H1 (cell line): ENCODE measurements at regions of chr4 and their contacts with region 1.

Region 1: DNA sequence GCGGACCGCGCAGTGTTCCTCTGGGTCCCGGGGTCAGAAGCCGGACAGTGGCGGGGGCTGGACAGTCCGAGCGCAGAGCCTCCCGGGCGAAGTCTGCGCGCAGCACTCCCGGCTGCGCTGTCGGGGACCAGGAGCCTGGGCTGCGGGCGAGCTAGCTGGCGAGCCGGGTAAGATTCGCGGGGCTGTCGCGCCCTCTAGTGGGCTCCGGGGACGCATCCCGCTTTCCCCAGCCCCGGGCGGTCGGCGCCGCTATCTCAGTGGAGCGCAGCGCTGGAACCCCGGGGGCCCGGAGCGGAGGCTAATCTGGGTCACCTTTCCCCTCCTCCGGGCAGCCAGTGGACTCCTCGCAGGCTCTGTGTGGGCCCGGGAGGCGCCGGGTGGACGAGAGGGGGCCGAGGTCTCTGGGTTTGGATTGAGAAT is 4.2 kb downstream of the PDGFRA start:
- DNase-seq: peak in 1 of 2 experiments; percentile 92
- H3K4me3 ChIP-seq: peak overlapping the region; percentile 51 to 85 (median 66)
- H3K27ac ChIP-seq: no peak overlapping the region
- H3K4me1 ChIP-seq: peaks cover 0 to 22% (median 15%) of the 10 kb centered on the region in 4 experiments; a peak in 6 of 7 replicates
- H3K27me3 ChIP-seq: peaks cover 38 to 56% (median 52%) of the 10 kb centered on the region in 4 experiments
- CTCF ChIP-seq: peak in 2 of 3 experiments; percentile 74 to 86; a peak in 3 of 4 replicates
- EP300 ChIP-seq: no peak
- POLR2A ChIP-seq: no peak
- RAD21 ChIP-seq: peak; percentile 79 to 90

Region 2: DNA sequence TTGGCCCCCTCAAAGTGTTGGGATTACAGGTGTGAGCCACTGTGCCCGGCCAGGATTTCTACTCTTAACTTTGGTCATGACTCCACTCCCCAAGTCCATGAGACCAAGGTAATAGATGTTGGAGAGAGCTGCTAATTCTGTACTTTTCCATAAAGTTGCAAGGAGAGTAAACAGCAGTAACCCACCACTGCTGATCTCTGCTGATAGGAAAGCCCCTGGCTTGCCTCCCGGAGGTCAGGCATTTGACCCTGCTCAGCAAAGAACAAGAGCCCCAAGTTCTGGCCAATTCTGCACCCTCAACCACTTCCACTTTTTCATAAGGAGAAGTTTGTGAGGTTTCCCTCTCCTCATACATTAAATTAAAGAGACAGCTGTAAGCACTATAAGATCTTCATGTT is 1228.1 kb before region 1 on chr4:
- CTCF ChIA-PET with region 1: interaction called, 10 read pairs
- POLR2A ChIA-PET with region 1: no interaction called
- DNase-seq: no peak
- H3K4me3 ChIP-seq: no peak overlapping the region
- H3K27ac ChIP-seq: no peak overlapping the region
- H3K4me1 ChIP-seq: no peaks in the 10 kb centered on the region
- H3K27me3 ChIP-seq: no peaks in the 10 kb centered on the region
- CTCF ChIP-seq: no peak
- EP300 ChIP-seq: no peak
- POLR2A ChIP-seq: no peak
- RAD21 ChIP-seq: no peak

Region 3: DNA sequence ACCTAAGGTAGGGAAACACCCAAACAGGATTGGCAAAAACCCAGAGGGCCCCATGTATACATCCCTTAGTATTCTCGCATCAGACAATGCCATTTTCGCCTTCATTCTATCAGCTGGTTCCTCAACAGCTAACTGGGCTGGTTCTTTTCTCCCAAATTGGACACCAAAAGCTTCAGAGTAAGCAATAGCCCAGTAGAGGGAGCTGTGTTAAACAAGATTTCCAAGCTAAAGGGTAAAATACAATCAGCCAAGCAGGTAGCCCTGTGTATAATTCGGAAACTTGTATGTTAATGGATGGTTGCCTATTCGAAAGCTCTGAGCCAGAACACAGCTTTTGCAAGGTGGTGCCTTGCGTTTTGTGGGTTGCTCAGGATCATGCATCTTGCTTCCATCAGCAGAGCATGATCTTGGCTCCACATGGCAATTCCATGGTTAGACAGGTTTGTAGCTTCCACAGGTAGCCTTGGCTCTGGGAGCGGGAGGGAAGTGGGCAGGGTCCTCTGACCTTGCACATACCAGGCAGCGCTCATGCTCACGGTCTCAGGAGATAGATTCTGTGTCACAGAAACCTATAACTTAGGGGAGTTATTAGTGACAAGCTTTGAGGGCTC is 526.8 kb before region 1 on chr4:
- CTCF ChIA-PET with region 1: interaction called, 16 read pairs
- POLR2A ChIA-PET with region 1: no interaction called
- DNase-seq: no peak
- H3K4me3 ChIP-seq: no peak overlapping the region
- H3K27ac ChIP-seq: no peak overlapping the region
- H3K4me1 ChIP-seq: peaks cover 0 to 10% (median 3%) of the 10 kb centered on the region in 4 experiments; a peak in 5 of 7 replicates
- H3K27me3 ChIP-seq: no peaks in the 10 kb centered on the region
- CTCF ChIP-seq: peak in 2 of 3 experiments; percentile 63 to 75; a peak in 3 of 4 replicates
- EP300 ChIP-seq: no peak
- POLR2A ChIP-seq: no peak
- RAD21 ChIP-seq: peak; percentile 66 to 76

Region 4: DNA sequence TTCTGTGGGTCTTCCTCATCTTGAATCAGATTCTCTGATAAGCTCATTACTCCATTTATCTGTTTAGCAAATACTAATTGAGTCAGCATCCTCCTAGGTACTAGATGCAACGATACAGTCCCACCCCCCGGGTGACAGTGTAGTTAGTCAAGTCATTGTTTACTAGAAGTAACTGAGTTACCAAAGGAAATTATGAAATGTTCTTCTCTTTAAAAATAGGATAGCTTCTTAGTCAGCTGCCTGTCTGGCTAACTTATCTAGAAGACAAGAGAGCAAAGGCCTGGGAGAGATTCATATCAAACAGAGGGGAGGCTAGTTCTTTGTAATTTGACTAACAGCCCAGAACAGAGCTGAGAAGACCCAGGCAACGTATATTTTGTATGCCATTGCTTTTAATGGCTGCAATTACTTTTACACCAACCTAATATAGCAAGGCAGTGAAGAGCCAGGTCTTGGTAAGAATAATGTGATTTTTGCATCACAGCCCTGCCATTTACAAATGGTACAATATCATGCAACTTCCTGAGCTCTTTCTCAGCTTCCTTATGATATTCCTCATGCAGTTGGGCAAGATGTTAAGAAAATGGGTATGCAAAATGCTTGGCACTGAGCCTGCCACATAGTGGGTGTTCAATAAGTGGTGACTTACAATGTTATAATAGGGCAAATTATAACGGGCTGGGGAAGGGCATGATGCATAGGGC is 318.8 kb before region 1 on chr4:
- CTCF ChIA-PET with region 1: interaction called, 65 read pairs
- POLR2A ChIA-PET with region 1: no interaction called
- DNase-seq: no peak
- H3K4me3 ChIP-seq: no peak overlapping the region
- H3K27ac ChIP-seq: no peak overlapping the region
- H3K4me1 ChIP-seq: no peaks in the 10 kb centered on the region
- H3K27me3 ChIP-seq: no peaks in the 10 kb centered on the region
- CTCF ChIP-seq: no peak
- EP300 ChIP-seq: no peak
- POLR2A ChIP-seq: no peak
- RAD21 ChIP-seq: no peak

Region 5: DNA sequence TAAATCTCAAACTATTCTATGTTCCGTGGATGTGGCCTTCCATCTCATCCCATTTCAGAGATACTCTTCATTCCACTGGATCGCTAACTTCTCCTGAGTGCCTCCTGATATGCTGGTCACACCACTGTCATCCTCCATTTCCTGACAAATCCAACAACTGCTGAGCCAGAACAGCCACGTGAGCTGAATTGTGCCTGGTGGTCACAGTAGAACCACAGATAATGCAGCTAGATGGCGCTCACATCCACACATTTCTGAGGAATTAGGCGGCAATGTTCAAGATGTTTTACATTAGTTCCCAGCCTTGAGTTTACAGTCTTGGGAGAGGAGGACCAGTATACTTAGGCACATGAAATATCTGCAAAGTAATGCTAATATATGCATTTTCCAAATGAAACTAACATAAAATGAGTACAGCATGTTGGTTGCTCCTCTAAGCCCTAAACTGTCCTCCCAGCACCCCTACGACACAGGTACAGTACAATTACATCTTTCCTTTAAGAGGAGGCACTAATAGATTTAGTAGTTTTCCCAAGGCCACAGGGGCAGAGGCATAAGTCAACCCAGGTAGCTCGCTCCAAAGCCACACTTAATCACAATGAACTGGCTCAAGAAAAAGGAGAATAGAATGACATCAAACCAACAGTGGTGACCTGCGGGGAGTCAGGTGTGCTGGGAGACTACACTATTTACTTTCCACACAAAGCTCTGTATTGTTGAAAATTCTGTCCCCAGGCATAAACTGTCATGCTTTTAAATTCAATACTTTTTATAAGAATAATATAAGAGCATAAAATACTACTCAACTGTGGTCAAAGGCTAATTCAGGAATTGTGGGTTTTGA is 303.1 kb before region 1 on chr4:
- CTCF ChIA-PET with region 1: interaction called, 53 read pairs
- POLR2A ChIA-PET with region 1: no interaction called
- DNase-seq: peak; percentile 49 to 65
- H3K4me3 ChIP-seq: no peak overlapping the region
- H3K27ac ChIP-seq: no peak overlapping the region
- H3K4me1 ChIP-seq: no peaks in the 10 kb centered on the region
- H3K27me3 ChIP-seq: no peaks in the 10 kb centered on the region; a peak in 1 of 7 replicates
- CTCF ChIP-seq: peak; percentile 68 to 95 (median 83)
- EP300 ChIP-seq: no peak
- POLR2A ChIP-seq: no peak
- RAD21 ChIP-seq: peak; percentile 90 to 91

Region 6: GRCh38 chr4:54277691-54278090 is 44.4 kb after region 1 on chr4:
- CTCF ChIA-PET with region 1: interaction called, 10 read pairs
- POLR2A ChIA-PET with region 1: no interaction called
- DNase-seq: no peak
- H3K4me3 ChIP-seq: peak overlapping the region in 2 of 4 experiments; percentile 24 to 50; a peak in 2 of 8 replicates
- H3K27ac ChIP-seq: no peak overlapping the region
- H3K4me1 ChIP-seq: peaks cover 5 to 18% (median 16%) of the 10 kb centered on the region in 4 experiments; a peak in 6 of 7 replicates
- H3K27me3 ChIP-seq: no peaks in the 10 kb centered on the region
- CTCF ChIP-seq: no peak
- EP300 ChIP-seq: no peak
- POLR2A ChIP-seq: no peak
- RAD21 ChIP-seq: no peak

Region 7: GRCh38 chr4:54296548-54297203 is 63.4 kb after region 1 on chr4:
- CTCF ChIA-PET with region 1: no interaction called
- POLR2A ChIA-PET with region 1: no interaction called
- DNase-seq: no peak
- H3K4me3 ChIP-seq: no peak overlapping the region
- H3K27ac ChIP-seq: no peak overlapping the region
- H3K4me1 ChIP-seq: no peaks in the 10 kb centered on the region
- H3K27me3 ChIP-seq: no peaks in the 10 kb centered on the region
- CTCF ChIP-seq: no peak
- EP300 ChIP-seq: no peak
- POLR2A ChIP-seq: no peak
- RAD21 ChIP-seq: no peak

Region 8: DNA sequence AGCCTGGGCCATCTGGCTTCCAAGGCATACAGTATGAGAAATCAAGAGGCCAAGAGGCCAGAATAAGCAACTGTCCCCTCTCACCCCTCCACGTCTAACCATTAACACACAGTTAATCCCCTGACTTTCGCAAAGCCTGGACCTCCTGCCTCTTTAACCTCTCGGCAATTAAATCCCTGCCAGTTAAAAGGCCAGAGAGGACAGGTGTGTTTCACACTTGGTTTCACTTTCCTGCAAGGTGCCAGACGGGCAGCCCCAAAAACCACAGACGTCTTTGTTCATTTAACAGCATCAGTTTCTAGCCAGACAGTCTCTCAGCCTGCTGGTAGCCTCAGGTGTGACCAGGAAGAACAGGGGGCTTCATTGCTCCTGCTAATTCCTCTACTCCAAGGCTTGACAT is 333.3 kb after region 1 on chr4:
- CTCF ChIA-PET with region 1: no interaction called
- POLR2A ChIA-PET with region 1: no interaction called
- DNase-seq: peak in 1 of 2 experiments; percentile 29
- H3K4me3 ChIP-seq: no peak overlapping the region; a peak in 1 of 8 replicates
- H3K27ac ChIP-seq: no peak overlapping the region
- H3K4me1 ChIP-seq: peaks cover 0 to 7% (median 3%) of the 10 kb centered on the region in 4 experiments; a peak in 5 of 7 replicates
- H3K27me3 ChIP-seq: peaks cover 0 to 8% (median 2%) of the 10 kb centered on the region in 4 experiments; a peak in 3 of 7 replicates
- CTCF ChIP-seq: no peak
- EP300 ChIP-seq: no peak
- POLR2A ChIP-seq: no peak
- RAD21 ChIP-seq: no peak